Natural killer cell (primary cell): ENCODE measurements at regions of chr11 and their contacts with region 1.

Region 1: DNA sequence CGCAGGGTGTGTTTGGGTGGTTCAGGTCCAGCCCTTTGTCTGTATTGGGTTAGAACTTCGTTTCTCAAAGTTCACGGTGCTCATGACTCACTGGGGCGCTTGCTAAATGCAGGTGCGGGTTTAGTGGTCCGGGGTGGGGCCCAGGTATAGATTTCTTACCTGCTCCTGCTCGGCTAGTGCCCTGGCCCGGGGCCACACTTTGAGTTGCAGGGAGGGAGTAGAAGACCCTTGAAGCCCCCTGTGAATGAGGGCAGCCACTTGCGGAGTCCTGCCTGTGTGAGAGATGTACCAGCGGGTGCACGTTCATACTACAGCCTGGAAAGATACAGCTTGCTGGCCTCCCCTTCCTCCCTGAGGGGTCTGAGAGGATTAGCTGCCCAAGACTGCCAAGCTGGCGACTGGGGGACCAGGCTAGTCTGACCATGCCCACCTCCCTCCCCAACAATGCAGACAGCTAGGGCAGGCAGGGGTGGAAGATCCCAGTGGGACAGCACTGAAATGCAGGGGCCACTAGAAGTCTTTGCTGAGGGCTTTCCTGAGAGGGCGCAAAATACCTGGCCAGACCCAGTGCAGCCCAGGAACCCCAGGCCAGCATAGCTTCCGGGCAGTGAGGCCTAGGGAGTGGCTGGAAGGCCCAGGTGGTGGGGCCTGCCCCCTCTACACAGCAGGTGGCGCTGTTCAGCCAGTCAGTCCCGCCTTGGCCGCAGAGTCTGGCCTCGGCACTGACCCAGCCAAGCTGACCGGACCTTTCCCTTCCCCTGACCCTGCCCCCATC is 5.1 kb upstream of the MYRF start:
- DNase-seq: peak; percentile 42 to 58
- ATAC-seq: peak; percentile 33 to 49 (median 38)
- H3K4me3 ChIP-seq: no peak overlapping the region
- H3K4me3 Mint-ChIP-seq: no peak overlapping the region
- H3K27ac ChIP-seq: no peak overlapping the region
- H3K27ac Mint-ChIP-seq: no peak overlapping the region
- H3K4me1 ChIP-seq: peaks cover 5% of the 10 kb centered on the region
- H3K4me1 Mint-ChIP-seq: no peaks in the 10 kb centered on the region
- H3K27me3 ChIP-seq: peaks cover 7% of the 10 kb centered on the region
- H3K27me3 Mint-ChIP-seq: peaks cover 8 to 13% of the 10 kb centered on the region in 2 donors
- CTCF ChIP-seq: peak; percentile 68

Region 2: GRCh38 chr11:61718621-61719302 is 28.6 kb before region 1 on chr11:
- intact Hi-C with region 1: no loop called
- DNase-seq: no peak
- ATAC-seq: no peak
- H3K4me3 ChIP-seq: no peak overlapping the region
- H3K4me3 Mint-ChIP-seq: no peak overlapping the region
- H3K27ac ChIP-seq: no peak overlapping the region
- H3K27ac Mint-ChIP-seq: no peak overlapping the region
- H3K4me1 ChIP-seq: no peaks in the 10 kb centered on the region
- H3K4me1 Mint-ChIP-seq: peaks cover 10 to 17% of the 10 kb centered on the region in 2 donors
- H3K27me3 ChIP-seq: no peaks in the 10 kb centered on the region
- H3K27me3 Mint-ChIP-seq: peaks cover 6 to 7% of the 10 kb centered on the region in 2 donors
- CTCF ChIP-seq: no peak

Region 3: GRCh38 chr11:61776551-61777075 is 29.2 kb after region 1 on chr11:
- intact Hi-C with region 1: loop called (anchors 2 kb)
- DNase-seq: peak; percentile 55 to 71
- ATAC-seq: peak; percentile 55 to 67 (median 60)
- H3K4me3 ChIP-seq: no peak overlapping the region
- H3K4me3 Mint-ChIP-seq: peak overlapping the region; percentile 69
- H3K27ac ChIP-seq: no peak overlapping the region
- H3K27ac Mint-ChIP-seq: peak overlapping the region; percentile 56 to 85
- H3K4me1 ChIP-seq: peaks cover 42% of the 10 kb centered on the region
- H3K4me1 Mint-ChIP-seq: peaks cover 13 to 28% of the 10 kb centered on the region in 2 donors
- H3K27me3 ChIP-seq: no peaks in the 10 kb centered on the region
- H3K27me3 Mint-ChIP-seq: no peaks in the 10 kb centered on the region
- CTCF ChIP-seq: peak; percentile 70